ENCODE measurements at regions of chr4 and their contacts with region 1.

Region 1: GRCh38 chr4:27048429-27049238 is 188.0 kb downstream of the STIM2 start:
- DNase-seq: peak; percentile 6
- H3K4me3 ChIP-seq: peak overlapping the region in 2 of 3 experiments; percentile 13 to 28
- H3K27ac ChIP-seq: no peak overlapping the region
- H3K4me1 ChIP-seq: peaks cover 4% of the 10 kb centered on the region
- H3K27me3 ChIP-seq: no peaks in the 10 kb centered on the region
- CTCF ChIP-seq: peak; percentile 53 to 66

Region 2: GRCh38 chr4:27176400-27176799 is 127.8 kb after region 1 on chr4:
- CTCF ChIA-PET with region 1: no interaction called
- dilution Hi-C with region 1: no loop called
- in situ Hi-C with region 1: no loop called
- intact Hi-C with region 1: loop called (anchors 5 kb)
- DNase-seq: peak; percentile 25
- H3K4me3 ChIP-seq: no peak overlapping the region
- H3K27ac ChIP-seq: no peak overlapping the region
- H3K4me1 ChIP-seq: no peaks in the 10 kb centered on the region
- H3K27me3 ChIP-seq: no peaks in the 10 kb centered on the region
- CTCF ChIP-seq: peak; percentile 14 to 50